ENCODE measurements at regions of chr13 and their contacts with region 1.

Region 1: DNA sequence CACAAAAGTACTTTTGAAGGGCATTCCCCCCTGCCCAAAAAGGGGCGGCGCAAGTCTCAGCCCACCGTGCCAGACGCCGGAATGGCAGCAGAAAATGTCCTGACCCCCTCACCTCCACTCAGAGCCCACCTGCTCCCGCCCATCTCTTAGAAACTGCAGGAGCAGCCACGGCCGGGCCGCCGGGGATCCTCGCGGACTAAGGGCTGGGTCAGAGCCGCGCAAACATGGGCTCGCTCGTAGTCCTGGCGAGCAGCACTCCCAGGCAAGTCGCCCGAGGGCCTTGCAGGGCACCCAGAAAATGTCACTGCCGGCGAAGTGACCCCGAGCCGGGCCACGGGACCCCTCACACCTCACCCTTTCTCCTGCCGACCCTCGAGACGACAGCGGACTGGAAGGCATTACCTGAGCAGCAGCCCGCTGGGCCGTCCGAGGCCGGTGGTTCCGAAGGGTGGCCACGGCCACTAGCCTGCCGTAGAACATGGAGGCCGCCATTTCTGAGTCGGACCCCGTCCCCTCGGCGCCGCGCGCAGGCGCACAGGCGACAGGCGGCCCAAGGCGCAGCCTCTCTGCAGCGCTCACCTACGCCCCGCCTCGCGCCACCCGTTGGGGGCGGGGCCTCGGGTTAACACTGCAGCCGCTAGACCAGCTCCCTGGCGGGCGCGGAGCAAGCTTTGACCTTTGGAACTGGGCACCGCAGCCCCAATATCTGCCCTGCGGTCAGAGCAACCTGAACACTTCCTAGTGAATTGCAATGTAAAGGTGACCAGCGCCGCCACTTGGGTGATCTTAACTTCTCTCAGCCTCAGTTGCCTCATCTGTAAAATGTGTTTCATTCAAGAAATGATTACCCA is at the start of gene SUCLA2:
- DNase-seq: peak; percentile 99

Region 2: DNA sequence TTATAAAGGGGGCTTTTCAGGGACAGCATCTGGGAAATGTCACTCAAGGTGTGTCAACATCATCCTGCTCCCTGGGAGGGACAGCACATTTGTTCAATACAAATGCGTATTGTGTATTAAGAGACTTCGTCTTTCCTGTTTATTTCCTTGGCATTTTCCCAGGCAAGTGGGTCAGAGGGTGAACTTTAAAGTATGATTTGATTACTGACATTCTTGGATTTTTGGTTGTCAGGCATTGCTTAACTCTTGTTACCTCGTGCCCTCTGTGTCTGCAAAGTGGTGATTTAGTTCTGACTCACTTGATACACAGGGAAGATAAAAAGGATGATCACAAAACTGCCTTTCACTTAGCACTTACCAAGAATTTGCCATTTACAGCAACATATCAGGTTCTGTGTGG is 292.6 kb before region 1 on chr13:
- CTCF ChIA-PET with region 1: no interaction called
- POLR2A ChIA-PET with region 1: no interaction called
- DNase-seq: no peak

Region 3: GRCh38 chr13:47990920-47991466 is 10.0 kb before region 1 on chr13:
- CTCF ChIA-PET with region 1: no interaction called
- POLR2A ChIA-PET with region 1: no interaction called
- DNase-seq: no peak

Region 4: GRCh38 chr13:48037346-48038173 is 36.6 kb after region 1 on chr13 and contains the start of gene NUDT15:
- CTCF ChIA-PET with region 1: interaction called, 4 read pairs
- POLR2A ChIA-PET with region 1: interaction called, 14 read pairs
- DNase-seq: peak; percentile 92

Region 5: DNA sequence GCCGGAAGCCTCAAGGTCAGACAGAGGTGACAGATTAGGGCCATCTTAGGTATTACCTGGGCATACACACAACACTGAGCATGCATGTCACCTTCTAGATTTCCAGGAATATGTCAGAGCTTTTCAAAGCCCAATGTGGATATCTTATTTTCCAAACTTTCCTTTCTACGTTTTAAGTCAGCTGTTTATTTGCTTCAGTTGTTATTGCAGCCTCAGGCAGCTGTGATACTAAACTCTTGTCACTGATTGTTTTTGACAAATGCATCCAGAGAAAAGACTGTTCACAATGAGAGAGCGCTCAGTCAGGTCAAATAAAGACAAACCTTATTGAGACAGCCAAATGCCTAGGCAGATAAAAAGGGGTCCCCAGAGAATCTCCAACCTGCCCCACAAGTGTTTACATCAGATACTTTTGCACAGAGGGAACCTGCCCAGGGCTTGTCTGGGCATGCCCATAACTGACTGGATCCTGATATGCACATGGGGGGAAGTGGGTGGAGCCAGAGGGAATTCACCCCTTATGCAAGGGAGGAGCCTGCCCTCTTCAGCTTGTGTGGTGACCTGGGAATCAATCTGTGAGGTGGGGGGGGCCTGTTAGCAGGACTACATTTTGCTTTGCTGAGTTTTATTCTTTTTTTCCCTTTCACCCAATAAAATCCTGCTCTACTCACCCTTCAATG is 65.4 kb after region 1 on chr13:
- CTCF ChIA-PET with region 1: no interaction called
- POLR2A ChIA-PET with region 1: no interaction called
- DNase-seq: no peak